ENCODE measurements at regions of chr5 and their contacts with region 1.

Region 1: DNA sequence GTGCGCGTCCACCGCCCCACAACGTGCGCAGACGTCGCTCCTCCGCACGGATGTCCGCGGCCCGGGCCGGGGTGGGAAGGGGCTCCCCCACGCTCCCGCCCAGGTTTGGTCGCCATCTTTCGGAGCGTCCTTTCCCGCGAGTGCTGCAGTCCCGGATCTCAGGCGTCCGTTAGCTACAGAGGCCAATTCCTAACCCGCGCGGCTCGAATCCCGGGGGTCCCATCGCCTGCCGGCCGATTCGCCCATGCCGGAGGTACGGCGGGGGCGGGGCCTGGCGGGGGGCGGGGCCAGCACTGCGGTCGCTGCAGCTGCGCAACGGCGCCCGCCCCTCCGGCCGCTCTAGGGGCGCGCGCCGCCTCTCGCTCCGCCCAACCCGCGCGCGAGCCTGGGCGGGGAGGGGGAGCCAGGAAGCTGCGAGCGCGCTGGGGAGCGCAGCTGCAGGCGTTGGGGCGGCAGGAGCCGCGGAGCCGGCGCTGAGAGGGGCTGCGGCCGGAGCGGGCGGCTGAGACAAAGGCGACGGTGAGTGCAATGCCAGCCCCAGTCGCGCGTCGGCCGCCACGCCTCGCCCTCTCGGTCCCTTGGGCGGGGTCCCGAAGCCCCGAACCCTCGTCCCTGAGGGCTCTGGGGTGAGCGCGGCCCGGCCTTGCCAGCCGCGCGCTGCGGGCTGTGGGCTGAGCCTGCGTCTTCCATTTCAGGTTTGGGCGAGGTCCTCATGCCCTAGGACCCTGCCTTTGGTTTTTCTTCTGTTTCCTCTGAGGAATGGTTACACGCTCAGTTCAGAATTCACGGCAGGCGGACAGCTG is at the start of gene CDC42SE2:
- DNase-seq: peak; percentile 95
- H3K4me3 ChIP-seq: peak within 1 kb of the TSS; percentile 97
- H3K27ac ChIP-seq: peak within 1 kb of the TSS; percentile 92
- H3K4me1 ChIP-seq: peaks cover 16% of the 10 kb centered on the region
- H3K27me3 ChIP-seq: no peaks in the 10 kb centered on the region
- CTCF ChIP-seq: no peak
- total RNA-seq, gene CDC42SE2: 25.5 and 26.6 TPM in 2 replicates

Region 2: GRCh38 chr5:131170540-131171275 is 93.1 kb before region 1 on chr5 and contains the start of gene LYRM7:
- CTCF ChIA-PET with region 1: no interaction called
- POLR2A ChIA-PET with region 1: no interaction called
- intact Hi-C with region 1: loop called (anchors 2 kb)
- DNase-seq: peak; percentile 100
- H3K4me3 ChIP-seq: peak within 1 kb of the TSS; percentile 68
- H3K27ac ChIP-seq: peak within 1 kb of the TSS; percentile 62
- H3K4me1 ChIP-seq: no peaks in the 10 kb centered on the region
- H3K27me3 ChIP-seq: no peaks in the 10 kb centered on the region
- CTCF ChIP-seq: no peak
- total RNA-seq, gene LYRM7: 16.9 and 17.3 TPM in 2 replicates

Region 3: DNA sequence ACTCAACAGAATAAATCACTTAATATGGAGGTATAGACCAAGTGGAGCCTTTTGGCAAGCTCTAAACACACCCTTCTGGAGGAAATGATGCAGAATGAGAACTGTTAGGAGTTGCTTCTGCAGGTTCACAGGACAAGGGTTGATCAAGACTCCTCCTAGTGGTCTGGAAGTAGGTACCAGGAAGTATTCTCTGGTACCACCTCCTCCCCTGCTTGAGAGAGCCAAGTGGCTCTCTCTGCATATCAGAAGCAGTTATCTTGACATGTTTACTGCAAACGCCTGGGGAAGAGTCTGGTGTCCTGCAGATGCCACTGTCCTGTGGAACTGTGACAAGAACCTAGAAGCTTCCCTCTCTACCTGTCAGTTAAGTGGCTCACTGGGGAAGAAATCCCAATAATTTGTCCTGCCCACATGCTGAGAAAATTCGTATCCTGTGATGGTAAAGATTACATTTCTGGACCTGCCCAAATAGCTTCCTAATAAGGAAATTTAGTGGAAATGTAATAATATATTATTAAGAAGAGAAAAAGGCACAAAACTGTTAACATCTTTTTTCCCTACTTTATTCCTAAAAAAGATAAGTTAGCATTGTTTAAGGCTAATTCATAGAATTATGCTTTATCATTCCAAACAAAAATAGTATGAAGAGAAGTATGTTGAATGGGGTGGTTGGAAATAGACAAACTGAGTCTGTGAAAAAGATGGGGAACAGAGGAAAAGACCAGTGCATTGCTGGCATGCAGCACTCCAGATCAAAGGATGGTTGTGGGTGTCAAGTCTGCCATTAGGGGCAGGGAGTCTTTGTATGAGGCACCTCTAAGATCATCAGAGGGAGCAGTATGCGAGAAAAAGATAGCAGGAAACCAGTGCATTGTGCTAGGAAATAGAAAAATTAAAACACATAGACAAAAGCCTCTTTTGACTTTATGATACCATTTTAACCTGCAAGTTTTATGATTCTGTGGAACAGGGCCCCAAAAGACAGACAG is 118.9 kb after region 1 on chr5:
- CTCF ChIA-PET with region 1: no interaction called
- POLR2A ChIA-PET with region 1: no interaction called
- intact Hi-C with region 1: loop called (anchors 2 kb)
- DNase-seq: peak; percentile 83
- H3K4me3 ChIP-seq: no peak overlapping the region
- H3K27ac ChIP-seq: no peak overlapping the region
- H3K4me1 ChIP-seq: peaks cover 43% of the 10 kb centered on the region
- H3K27me3 ChIP-seq: no peaks in the 10 kb centered on the region
- CTCF ChIP-seq: peak; percentile 63

Region 4: GRCh38 chr5:131417240-131417869 is 153.5 kb after region 1 on chr5:
- CTCF ChIA-PET with region 1: no interaction called
- POLR2A ChIA-PET with region 1: no interaction called
- intact Hi-C with region 1: no loop called
- DNase-seq: peak; percentile 80
- H3K4me3 ChIP-seq: no peak overlapping the region
- H3K27ac ChIP-seq: no peak overlapping the region
- H3K4me1 ChIP-seq: no peaks in the 10 kb centered on the region
- H3K27me3 ChIP-seq: no peaks in the 10 kb centered on the region
- CTCF ChIP-seq: peak; percentile 90

Measured in A673 (cell line).